ENCODE measurements at regions of chr17 and their contacts with region 1.

Region 1: GRCh38 chr17:74864866-74865395 is 5.2 kb upstream of the GRIN2C start:
- DNase-seq: peak; percentile 66 to 86 (median 83)
- H3K4me3 ChIP-seq: no peak overlapping the region
- H3K27ac ChIP-seq: no peak overlapping the region
- H3K4me1 ChIP-seq: peaks cover 8% of the 10 kb centered on the region
- H3K27me3 ChIP-seq: peaks cover 3% of the 10 kb centered on the region
- CTCF ChIP-seq: peak; percentile 90 to 94 (median 93)
- EP300 ChIP-seq: no peak
- POLR2A ChIP-seq: no peak

Region 2: GRCh38 chr17:74748529-74749365 is 116.2 kb before region 1 on chr17 and contains the start of gene NHERF1:
- intact Hi-C with region 1: loop called in 2 of 4 experiments (anchors 5 kb)
- DNase-seq: peak; percentile 91 to 96 (median 94)
- H3K4me3 ChIP-seq: peak within 1 kb of the TSS; percentile 72
- H3K27ac ChIP-seq: peak within 1 kb of the TSS in 1 of 2 donors; percentile 65
- H3K4me1 ChIP-seq: peaks cover 10% of the 10 kb centered on the region
- H3K27me3 ChIP-seq: no peaks in the 10 kb centered on the region
- CTCF ChIP-seq: peak in 1 of 3 donors; percentile 23
- EP300 ChIP-seq: no peak
- POLR2A ChIP-seq: peak; percentile 92
- total RNA-seq, gene NHERF1: 12.1 to 101 (median 21.7) TPM

Region 3: GRCh38 chr17:74785096-74785980 is 79.6 kb before region 1 on chr17:
- intact Hi-C with region 1: loop called (anchors 2 to 5 kb)
- DNase-seq: no peak
- H3K4me3 ChIP-seq: no peak overlapping the region
- H3K27ac ChIP-seq: no peak overlapping the region
- H3K4me1 ChIP-seq: no peaks in the 10 kb centered on the region
- H3K27me3 ChIP-seq: no peaks in the 10 kb centered on the region
- CTCF ChIP-seq: no peak
- EP300 ChIP-seq: no peak
- POLR2A ChIP-seq: no peak

Region 4: GRCh38 chr17:74790161-74791054 is 74.5 kb before region 1 on chr17:
- intact Hi-C with region 1: loop called (anchors 2 to 5 kb)
- DNase-seq: no peak
- H3K4me3 ChIP-seq: no peak overlapping the region
- H3K27ac ChIP-seq: no peak overlapping the region
- H3K4me1 ChIP-seq: no peaks in the 10 kb centered on the region
- H3K27me3 ChIP-seq: no peaks in the 10 kb centered on the region
- CTCF ChIP-seq: no peak
- EP300 ChIP-seq: no peak
- POLR2A ChIP-seq: no peak